ENCODE measurements at regions of chr1 and their contacts with region 1.

Region 1: GRCh38 chr1:179293340-179294327 is at the start of gene SOAT1:
- DNase-seq: peak; percentile 98
- H3K4me3 ChIP-seq: peak within 1 kb of the TSS; percentile 55 to 88 (median 80)
- H3K27ac ChIP-seq: peak within 1 kb of the TSS; percentile 88 to 97 (median 95)
- H3K4me1 ChIP-seq: peaks cover 17 to 56% (median 44%) of the 10 kb centered on the region in 6 donors
- H3K27me3 ChIP-seq: no peaks in the 10 kb centered on the region
- CTCF ChIP-seq: peak in 7 of 11 experiments; percentile 11 to 47 (median 33)
- POLR2A ChIP-seq: peak in 1 of 3 donors; percentile 75
- total RNA-seq, gene SOAT1: 24.7 to 47.6 (median 33.7) TPM

Region 2: GRCh38 chr1:179121159-179121938 is 172.3 kb before region 1 on chr1:
- intact Hi-C with region 1: loop called (anchors 10 kb)
- DNase-seq: no peak
- H3K4me3 ChIP-seq: no peak overlapping the region
- H3K27ac ChIP-seq: no peak overlapping the region
- H3K4me1 ChIP-seq: peaks cover 0 to 10% (median 0%) of the 10 kb centered on the region in 6 donors
- H3K27me3 ChIP-seq: no peaks in the 10 kb centered on the region
- CTCF ChIP-seq: peak in 10 of 11 experiments; percentile 10 to 66 (median 53)
- POLR2A ChIP-seq: no peak

Region 3: DNA sequence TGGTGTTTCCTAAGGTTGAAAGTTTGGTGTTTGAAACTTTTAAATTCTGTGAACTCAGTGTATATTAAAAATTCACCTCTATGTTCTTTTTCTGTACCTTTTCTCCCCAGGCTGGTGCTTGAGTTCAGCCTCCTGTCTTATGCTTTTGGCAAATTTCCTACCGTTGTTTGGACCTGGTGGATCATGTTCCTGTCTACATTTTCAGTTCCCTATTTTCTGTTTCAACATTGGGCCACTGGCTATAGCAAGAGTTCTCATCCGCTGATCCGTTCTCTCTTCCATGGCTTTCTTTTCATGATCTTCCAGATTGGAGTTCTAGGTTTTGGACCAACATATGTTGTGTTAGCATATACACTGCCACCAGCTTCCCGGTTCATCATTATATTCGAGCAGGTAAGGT is 47.3 kb after region 1 on chr1:
- intact Hi-C with region 1: loop called (anchors 10 kb)
- DNase-seq: no peak
- H3K4me3 ChIP-seq: no peak overlapping the region
- H3K27ac ChIP-seq: no peak overlapping the region
- H3K4me1 ChIP-seq: peaks cover 0 to 7% (median 0%) of the 10 kb centered on the region in 6 donors
- H3K27me3 ChIP-seq: no peaks in the 10 kb centered on the region
- CTCF ChIP-seq: no peak
- POLR2A ChIP-seq: no peak

Region 4: GRCh38 chr1:179632868-179633267 is 339.2 kb after region 1 on chr1:
- intact Hi-C with region 1: no loop called
- DNase-seq: no peak
- H3K4me3 ChIP-seq: no peak overlapping the region
- H3K27ac ChIP-seq: no peak overlapping the region
- H3K4me1 ChIP-seq: no peaks in the 10 kb centered on the region
- H3K27me3 ChIP-seq: no peaks in the 10 kb centered on the region
- CTCF ChIP-seq: no peak
- POLR2A ChIP-seq: no peak